Mammary epithelial cell (primary cell): ENCODE measurements at regions of chr7 and their contacts with region 1.

Region 1: DNA sequence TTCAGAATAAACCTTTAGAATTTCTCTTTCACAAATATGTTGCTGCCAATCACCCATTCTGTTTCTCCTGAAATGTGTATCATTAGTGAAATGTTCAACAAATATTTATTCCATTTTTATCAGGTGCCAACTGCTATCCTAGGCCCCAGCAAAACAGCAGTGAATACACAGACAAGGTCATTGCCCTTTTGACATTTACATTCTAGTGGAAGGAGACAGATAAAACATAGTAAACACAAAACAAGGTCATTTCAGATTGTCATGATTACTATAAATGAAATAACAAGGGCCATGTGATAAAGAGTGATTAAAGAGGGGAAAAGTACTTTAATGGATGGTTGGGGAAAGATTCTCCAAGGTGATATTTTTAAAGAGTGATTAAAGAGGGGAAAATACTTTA is 404.8 kb upstream of the PHF14 start:
- DNase-seq: no peak
- H3K4me3 ChIP-seq: no peak overlapping the region
- H3K27ac ChIP-seq: no peak overlapping the region
- H3K4me1 ChIP-seq: no peaks in the 10 kb centered on the region
- H3K27me3 ChIP-seq: no peaks in the 10 kb centered on the region
- CTCF ChIP-seq: no peak

Region 2: GRCh38 chr7:10483671-10484070 is 85.2 kb before region 1 on chr7:
- CTCF ChIA-PET with region 1: interaction called, 11 read pairs
- dilution Hi-C with region 1: no loop called
- in situ Hi-C with region 1: no loop called
- intact Hi-C with region 1: no loop called
- DNase-seq: peak; percentile 55
- H3K4me3 ChIP-seq: no peak overlapping the region
- H3K27ac ChIP-seq: no peak overlapping the region
- H3K4me1 ChIP-seq: peaks cover 12% of the 10 kb centered on the region
- H3K27me3 ChIP-seq: no peaks in the 10 kb centered on the region
- CTCF ChIP-seq: no peak